ENCODE measurements at regions of chr5 and their contacts with region 1.

Region 1: DNA sequence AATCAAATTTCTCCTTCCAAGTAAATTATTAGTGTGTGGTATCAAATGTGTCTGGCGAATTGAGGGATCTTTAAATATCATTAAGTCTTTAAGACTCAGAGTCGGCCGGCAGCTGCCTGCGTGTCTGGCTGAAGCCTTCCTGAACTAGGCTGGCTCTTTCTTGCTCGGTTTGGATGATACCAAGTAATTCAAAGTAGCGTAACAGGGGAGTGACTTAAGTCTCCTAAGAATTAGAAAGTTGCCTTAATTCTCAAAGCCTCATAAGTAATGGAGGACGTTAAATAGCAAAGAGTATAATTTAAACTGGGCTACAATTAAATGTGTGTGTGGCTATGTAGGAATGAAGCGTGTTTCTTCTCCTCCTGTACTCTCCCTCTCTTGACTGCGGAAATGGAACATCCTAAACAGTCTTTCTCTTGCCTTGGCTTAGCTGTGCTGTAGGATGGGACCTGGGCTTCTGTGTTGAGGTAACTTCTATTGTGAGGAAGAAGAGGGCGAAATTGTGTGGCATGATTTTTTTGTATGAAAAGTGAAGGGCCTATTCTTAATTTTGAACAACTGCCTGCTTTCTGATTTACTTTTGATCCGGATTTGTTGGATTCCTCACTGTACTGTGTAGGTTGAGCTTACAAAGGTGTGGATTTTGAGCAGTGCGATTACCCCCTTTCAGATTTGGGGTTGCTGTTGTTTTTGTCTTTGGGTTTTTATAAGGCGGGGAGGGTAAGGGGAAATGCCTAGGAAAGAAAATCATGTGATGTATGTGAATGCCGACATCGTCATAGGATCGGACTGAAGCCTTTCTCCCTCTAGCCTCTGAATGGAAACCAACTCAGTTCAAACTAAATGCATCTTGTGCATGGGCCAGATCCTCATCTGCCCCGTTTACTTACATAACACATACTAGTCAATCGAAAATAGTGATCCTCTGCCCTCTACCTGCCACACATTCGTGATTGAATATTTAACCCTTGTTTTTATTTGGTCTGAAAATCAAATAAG is 29.9 kb downstream of the CPEB4 start:
- DNase-seq: peak; percentile 85
- H3K4me3 Mint-ChIP-seq: no peak overlapping the region
- H3K27ac Mint-ChIP-seq: no peak overlapping the region
- H3K4me1 Mint-ChIP-seq: peaks cover 7% of the 10 kb centered on the region
- H3K27me3 Mint-ChIP-seq: no peaks in the 10 kb centered on the region

Region 2: GRCh38 chr5:173972925-173973615 is 55.0 kb after region 1 on chr5:
- intact Hi-C with region 1: loop called (anchors 5 kb)
- DNase-seq: peak; percentile 91
- H3K4me3 Mint-ChIP-seq: peak overlapping the region; percentile 84
- H3K27ac Mint-ChIP-seq: no peak overlapping the region
- H3K4me1 Mint-ChIP-seq: peaks cover 13% of the 10 kb centered on the region
- H3K27me3 Mint-ChIP-seq: peaks cover 29% of the 10 kb centered on the region

Region 3: DNA sequence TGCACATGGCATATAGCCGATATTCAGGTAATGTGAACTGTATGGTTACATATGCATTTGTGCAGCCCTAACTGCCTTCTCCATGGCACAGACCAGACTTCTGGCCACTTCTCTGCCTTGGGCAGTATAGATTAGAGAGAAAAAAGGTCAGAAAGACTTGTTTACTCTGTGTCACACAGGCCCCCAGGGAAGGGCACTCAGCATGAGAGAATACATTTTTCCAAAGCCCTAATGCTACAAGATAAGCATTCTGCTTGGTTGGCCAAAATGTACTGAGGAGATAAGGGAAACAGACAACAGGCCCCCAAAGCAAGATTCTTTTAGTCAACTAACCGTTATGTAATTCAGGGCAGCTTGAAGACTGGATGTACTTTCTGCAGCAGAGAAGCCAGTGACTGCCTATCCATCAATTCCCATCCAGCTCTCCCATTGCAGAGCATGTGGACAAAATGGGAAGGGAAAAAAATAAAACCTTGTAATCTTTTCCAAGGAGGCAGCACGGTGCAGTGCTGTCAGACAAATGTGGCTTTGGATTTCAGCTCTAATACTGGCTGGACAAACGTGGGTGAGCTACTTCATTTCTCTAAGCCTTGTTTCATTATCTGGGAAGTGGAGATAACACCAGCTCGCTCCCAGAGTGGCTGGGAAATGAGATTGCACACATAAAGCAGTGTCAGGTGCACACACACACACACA is 333.4 kb after region 1 on chr5:
- intact Hi-C with region 1: no loop called
- DNase-seq: no peak
- H3K4me3 Mint-ChIP-seq: no peak overlapping the region
- H3K27ac Mint-ChIP-seq: no peak overlapping the region
- H3K4me1 Mint-ChIP-seq: no peaks in the 10 kb centered on the region
- H3K27me3 Mint-ChIP-seq: no peaks in the 10 kb centered on the region

Region 4: GRCh38 chr5:175840050-175840841 is 1922.2 kb after region 1 on chr5:
- intact Hi-C with region 1: no loop called
- DNase-seq: no peak
- H3K4me3 Mint-ChIP-seq: no peak overlapping the region
- H3K27ac Mint-ChIP-seq: no peak overlapping the region
- H3K4me1 Mint-ChIP-seq: no peaks in the 10 kb centered on the region
- H3K27me3 Mint-ChIP-seq: no peaks in the 10 kb centered on the region

Measured in activated CD4-positive, alpha-beta T cell treated with anti-CD3 and anti-CD28 coated beads, Interleukin-2, amount 10 ng/mL, durations not matched to agents 24 days and 14 days (primary cell).